HCT116 (cell line): ENCODE measurements at regions of chr19 and their contacts with region 1.

Region 1: DNA sequence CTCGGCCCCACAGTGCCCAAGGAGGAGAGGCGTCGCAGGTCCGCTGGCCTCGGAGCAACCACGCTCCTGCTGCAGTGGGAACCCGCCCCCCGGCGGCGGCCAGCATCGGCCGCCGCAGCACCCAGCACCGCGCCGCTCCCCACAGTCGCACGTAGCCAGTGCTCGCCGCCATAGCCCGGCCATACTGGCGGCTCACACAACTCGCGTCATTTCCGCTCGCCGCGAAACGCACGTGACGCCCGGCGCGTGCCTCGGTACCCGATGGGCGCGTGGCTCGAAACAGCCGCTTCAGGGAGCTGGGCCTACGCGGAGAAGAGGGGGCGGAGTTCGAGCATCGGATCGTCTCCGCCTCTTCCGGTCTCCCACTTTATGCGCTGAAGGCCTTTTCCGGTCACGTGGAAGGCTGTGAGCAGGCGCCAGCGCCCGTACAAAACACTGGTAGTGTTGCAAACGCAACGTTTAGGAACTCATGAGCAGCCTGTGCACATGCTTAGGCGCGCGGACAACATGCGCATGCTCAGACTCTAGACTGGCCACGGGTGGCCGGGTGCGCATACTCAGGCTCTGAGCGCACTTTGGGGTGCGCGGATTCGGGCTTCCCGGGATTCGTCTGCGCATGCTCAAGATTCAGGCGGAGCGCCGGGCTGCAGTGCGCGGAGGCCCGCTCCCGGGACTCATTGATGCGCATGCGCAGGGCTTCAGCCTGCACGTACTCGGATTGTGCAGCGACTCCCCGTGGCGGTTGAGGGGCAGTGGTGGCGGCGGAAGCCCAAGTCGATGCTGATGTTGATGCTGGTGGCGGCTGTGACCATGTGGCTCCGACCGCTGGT is at the starts of genes CATSPERD and LONP1:
- DNase-seq: peak; percentile 97
- ATAC-seq: peak; percentile 92
- H3K4me3 ChIP-seq: peak within 1 kb of the TSS; percentile 99 to 100
- H3K27ac ChIP-seq: peak within 1 kb of the TSS; percentile 85
- H3K4me1 ChIP-seq: peaks cover 10 to 28% of the 10 kb centered on the region in 2 experiments
- H3K27me3 ChIP-seq: no peaks in the 10 kb centered on the region
- CTCF ChIP-seq: peak; percentile 62 to 92 (median 88)
- POLR2A ChIP-seq: peak; percentile 67
- RAD21 ChIP-seq: no peak
- total RNA-seq, gene CATSPERD: not detected
- total RNA-seq, gene LONP1: 180 TPM

Region 2: GRCh38 chr19:5515737-5516136 is 204.4 kb before region 1 on chr19:
- CTCF ChIA-PET with region 1: no interaction called
- POLR2A ChIA-PET with region 1: no interaction called
- RAD21 ChIA-PET with region 1: no interaction called
- intact Hi-C with region 1: no loop called
- DNase-seq: no peak
- ATAC-seq: no peak
- H3K4me3 ChIP-seq: no peak overlapping the region
- H3K27ac ChIP-seq: no peak overlapping the region
- H3K4me1 ChIP-seq: no peaks in the 10 kb centered on the region
- H3K27me3 ChIP-seq: no peaks in the 10 kb centered on the region
- CTCF ChIP-seq: peak; percentile 25 to 73 (median 62); a peak in 5 of 6 replicates
- POLR2A ChIP-seq: no peak
- RAD21 ChIP-seq: peak; percentile 43; the same call in 1 of the 2 replicates

Region 3: GRCh38 chr19:5680437-5681368 is 39.5 kb before region 1 on chr19 and contains the starts of genes HSD11B1L and MICOS13:
- CTCF ChIA-PET with region 1: no interaction called
- POLR2A ChIA-PET with region 1: interaction called, 3 read pairs
- RAD21 ChIA-PET with region 1: no interaction called
- intact Hi-C with region 1: loop called (anchors 1 kb)
- DNase-seq: peak; percentile 97
- ATAC-seq: peak; percentile 96
- H3K4me3 ChIP-seq: peak within 1 kb of the TSS; percentile 84 to 99
- H3K27ac ChIP-seq: peak within 1 kb of the TSS; percentile 69
- H3K4me1 ChIP-seq: peaks cover 5 to 17% of the 10 kb centered on the region in 2 experiments; a peak in 2 of 4 replicates
- H3K27me3 ChIP-seq: no peaks in the 10 kb centered on the region
- CTCF ChIP-seq: no peak
- POLR2A ChIP-seq: peak; percentile 68
- RAD21 ChIP-seq: no peak
- total RNA-seq, gene HSD11B1L: 6.0 TPM
- total RNA-seq, gene MICOS13: 61.6 TPM

Region 4: DNA sequence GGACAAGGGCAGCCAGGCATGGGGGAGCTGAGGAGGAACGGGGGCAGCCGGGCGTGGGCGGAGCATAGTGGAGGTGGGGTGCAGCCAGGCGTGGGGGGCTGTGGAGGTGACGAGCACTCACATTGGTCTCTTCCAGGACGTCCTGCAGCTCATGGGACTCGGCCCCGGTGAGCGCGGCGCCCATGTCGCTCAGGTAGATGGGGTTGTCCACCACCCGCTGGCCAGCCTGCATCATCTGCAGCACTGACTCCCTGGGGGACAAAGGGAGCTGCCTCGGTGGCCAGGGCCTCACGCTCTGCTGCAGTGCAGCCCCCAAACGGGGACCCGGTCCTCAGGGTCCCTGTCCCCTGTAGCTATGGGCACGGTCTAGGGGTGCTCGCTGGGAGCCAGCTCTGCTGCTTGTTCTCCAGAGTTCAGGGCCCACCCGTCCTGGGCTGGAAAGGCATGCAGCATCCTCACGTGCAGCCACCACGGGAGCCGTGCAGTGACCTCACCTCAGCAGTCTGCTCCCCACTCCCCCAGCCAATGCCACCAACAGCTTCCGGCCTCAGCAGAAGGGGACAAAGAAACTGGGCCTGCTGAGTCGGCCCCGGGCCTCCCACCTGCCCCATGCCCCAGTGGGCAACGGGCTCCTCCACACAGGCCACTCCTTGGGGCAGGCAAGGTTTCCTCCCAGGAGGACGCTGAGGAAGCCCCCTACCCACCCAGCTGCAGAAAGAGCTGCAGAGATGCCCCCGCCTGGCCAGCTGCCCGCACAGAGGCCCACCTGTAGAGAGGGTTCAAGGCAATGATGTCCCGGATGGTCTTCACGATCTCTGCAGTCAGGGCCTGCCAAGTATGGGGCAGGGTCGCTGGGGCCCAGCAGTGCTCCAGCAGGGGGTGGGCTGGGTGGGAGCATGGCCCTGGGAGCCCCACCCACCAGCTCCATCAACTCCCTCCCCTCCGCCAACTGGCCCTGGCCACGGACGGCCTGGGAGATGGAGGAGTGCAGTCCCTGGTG is 12.3 kb before region 1 on chr19:
- CTCF ChIA-PET with region 1: no interaction called
- POLR2A ChIA-PET with region 1: no interaction called
- RAD21 ChIA-PET with region 1: no interaction called
- intact Hi-C with region 1: no loop called
- DNase-seq: no peak
- ATAC-seq: peak; percentile 13; the same call in 1 of the 2 replicates
- H3K4me3 ChIP-seq: no peak overlapping the region
- H3K27ac ChIP-seq: no peak overlapping the region
- H3K4me1 ChIP-seq: no peaks in the 10 kb centered on the region; a peak in 1 of 4 replicates
- H3K27me3 ChIP-seq: no peaks in the 10 kb centered on the region
- CTCF ChIP-seq: no peak
- POLR2A ChIP-seq: no peak
- RAD21 ChIP-seq: no peak